ENCODE measurements at regions of chr1 and their contacts with region 1.

Region 1: DNA sequence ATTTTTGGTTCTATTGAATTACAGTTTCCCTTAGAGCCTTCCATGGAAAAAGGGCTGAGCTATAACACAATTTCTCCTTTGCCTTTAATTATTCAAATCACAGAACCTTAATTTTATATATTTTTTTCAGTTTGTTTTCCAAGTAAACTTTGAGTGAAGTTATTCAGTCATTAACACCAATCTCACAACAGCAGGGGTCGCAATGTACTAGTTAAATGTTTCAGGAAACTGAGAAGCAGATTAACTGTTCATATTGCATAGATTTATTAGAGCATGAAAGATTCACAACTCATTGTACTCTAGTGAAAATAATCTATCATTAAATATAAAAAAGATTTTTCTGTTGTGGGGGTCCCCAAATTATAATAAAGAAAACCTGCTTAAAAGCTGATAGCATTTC is 64.1 kb downstream of the KIFAP3 start:
- DNase-seq: peak; percentile 55
- ATAC-seq: peak; percentile 56
- H3K4me3 ChIP-seq: no peak overlapping the region
- H3K27ac ChIP-seq: no peak overlapping the region
- H3K4me1 ChIP-seq: no peaks in the 10 kb centered on the region
- H3K27me3 ChIP-seq: no peaks in the 10 kb centered on the region
- CTCF ChIP-seq: peak; percentile 52
- POLR2A ChIP-seq: no peak
- RAD21 ChIP-seq: peak; percentile 58

Region 2: DNA sequence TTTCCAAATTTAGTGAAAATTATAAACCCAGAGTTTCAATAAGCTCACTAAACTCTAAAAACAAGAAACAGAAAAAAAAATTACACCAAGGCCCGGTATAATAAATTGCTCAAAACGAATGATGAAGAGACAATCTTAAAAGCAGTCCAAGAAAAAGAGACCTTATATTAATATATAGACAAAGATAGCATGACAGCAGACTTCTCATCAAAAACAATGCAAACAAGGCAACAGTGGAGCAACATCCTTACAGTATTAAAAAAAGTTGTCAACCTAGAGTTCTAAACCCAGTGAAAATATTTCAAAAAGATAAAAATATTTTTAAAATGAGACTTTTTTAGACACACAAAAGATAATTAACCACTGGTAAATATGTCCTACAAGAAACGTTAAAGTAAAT is 17.3 kb after region 1 on chr1:
- CTCF ChIA-PET with region 1: no interaction called
- POLR2A ChIA-PET with region 1: no interaction called
- dilution Hi-C with region 1: no loop called
- in situ Hi-C with region 1: no loop called
- intact Hi-C with region 1: no loop called
- DNase-seq: no peak
- ATAC-seq: no peak
- H3K4me3 ChIP-seq: no peak overlapping the region
- H3K27ac ChIP-seq: no peak overlapping the region
- H3K4me1 ChIP-seq: no peaks in the 10 kb centered on the region
- H3K27me3 ChIP-seq: no peaks in the 10 kb centered on the region
- CTCF ChIP-seq: no peak
- POLR2A ChIP-seq: no peak
- RAD21 ChIP-seq: no peak

Region 3: GRCh38 chr1:170765712-170766330 is 755.4 kb after region 1 on chr1:
- CTCF ChIA-PET with region 1: no interaction called
- POLR2A ChIA-PET with region 1: no interaction called
- dilution Hi-C with region 1: no loop called
- in situ Hi-C with region 1: no loop called
- intact Hi-C with region 1: loop called (anchors 2 kb)
- DNase-seq: peak; percentile 64
- ATAC-seq: peak; percentile 87
- H3K4me3 ChIP-seq: no peak overlapping the region
- H3K27ac ChIP-seq: no peak overlapping the region
- H3K4me1 ChIP-seq: no peaks in the 10 kb centered on the region
- H3K27me3 ChIP-seq: no peaks in the 10 kb centered on the region
- CTCF ChIP-seq: peak; percentile 75
- POLR2A ChIP-seq: no peak
- RAD21 ChIP-seq: peak; percentile 84

Region 4: DNA sequence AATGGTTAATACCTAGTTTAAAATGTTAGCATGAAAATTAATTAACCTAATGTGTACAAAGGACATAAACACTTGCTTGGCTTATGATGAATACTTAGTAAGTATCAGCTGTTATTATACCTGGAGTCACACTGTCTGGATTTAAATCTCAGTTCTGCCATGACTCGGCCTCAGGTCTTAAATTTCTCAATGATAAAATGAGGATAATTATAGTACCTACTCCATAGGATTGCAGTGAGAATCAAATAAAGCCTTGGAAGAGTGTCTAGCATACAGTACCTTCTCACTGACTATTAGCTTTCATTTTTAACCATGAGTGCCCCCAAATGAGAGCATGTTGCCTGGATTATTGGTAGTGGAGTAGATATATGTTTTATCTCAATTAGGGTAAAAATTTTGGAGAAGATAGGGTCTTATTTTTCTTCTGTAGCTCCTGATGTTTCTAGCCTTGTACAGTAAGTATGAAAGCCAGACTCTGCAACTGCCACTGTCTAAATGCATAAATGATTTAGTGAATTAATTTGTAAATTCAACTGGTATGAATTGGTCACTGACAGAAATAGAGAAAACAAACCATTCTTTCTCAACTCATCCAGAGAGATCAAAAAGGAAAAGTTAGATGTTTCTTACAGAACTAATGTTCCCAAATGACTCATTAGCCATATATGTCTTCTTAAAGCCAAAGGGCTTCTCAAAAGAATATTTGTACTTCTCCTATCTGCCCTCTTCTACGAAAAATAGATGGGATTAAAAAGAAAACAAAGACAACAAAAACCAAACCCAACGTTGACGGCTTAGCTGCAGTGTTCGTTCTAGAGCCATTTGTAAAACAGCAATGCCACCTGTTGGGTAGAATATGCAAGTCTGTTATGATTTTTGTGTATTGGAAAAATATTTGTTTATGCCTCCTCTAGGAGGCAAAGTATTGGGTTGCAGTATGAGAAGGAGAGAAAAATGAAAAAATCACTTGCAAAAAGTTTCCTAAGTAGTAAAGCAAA is 871.1 kb after region 1 on chr1:
- CTCF ChIA-PET with region 1: no interaction called
- POLR2A ChIA-PET with region 1: no interaction called
- dilution Hi-C with region 1: no loop called
- in situ Hi-C with region 1: no loop called
- intact Hi-C with region 1: loop called (anchors 2 kb)
- DNase-seq: peak; percentile 42
- ATAC-seq: peak; percentile 63
- H3K4me3 ChIP-seq: no peak overlapping the region
- H3K27ac ChIP-seq: no peak overlapping the region
- H3K4me1 ChIP-seq: no peaks in the 10 kb centered on the region
- H3K27me3 ChIP-seq: no peaks in the 10 kb centered on the region
- CTCF ChIP-seq: peak; percentile 52
- POLR2A ChIP-seq: no peak
- RAD21 ChIP-seq: peak; percentile 74

Region 5: GRCh38 chr1:170893655-170894297 is 883.3 kb after region 1 on chr1:
- CTCF ChIA-PET with region 1: no interaction called
- POLR2A ChIA-PET with region 1: no interaction called
- dilution Hi-C with region 1: no loop called
- in situ Hi-C with region 1: no loop called
- intact Hi-C with region 1: loop called (anchors 1 kb)
- DNase-seq: no peak
- ATAC-seq: no peak
- H3K4me3 ChIP-seq: no peak overlapping the region
- H3K27ac ChIP-seq: no peak overlapping the region
- H3K4me1 ChIP-seq: no peaks in the 10 kb centered on the region
- H3K27me3 ChIP-seq: no peaks in the 10 kb centered on the region
- CTCF ChIP-seq: no peak
- POLR2A ChIP-seq: no peak
- RAD21 ChIP-seq: no peak

Region 6: DNA sequence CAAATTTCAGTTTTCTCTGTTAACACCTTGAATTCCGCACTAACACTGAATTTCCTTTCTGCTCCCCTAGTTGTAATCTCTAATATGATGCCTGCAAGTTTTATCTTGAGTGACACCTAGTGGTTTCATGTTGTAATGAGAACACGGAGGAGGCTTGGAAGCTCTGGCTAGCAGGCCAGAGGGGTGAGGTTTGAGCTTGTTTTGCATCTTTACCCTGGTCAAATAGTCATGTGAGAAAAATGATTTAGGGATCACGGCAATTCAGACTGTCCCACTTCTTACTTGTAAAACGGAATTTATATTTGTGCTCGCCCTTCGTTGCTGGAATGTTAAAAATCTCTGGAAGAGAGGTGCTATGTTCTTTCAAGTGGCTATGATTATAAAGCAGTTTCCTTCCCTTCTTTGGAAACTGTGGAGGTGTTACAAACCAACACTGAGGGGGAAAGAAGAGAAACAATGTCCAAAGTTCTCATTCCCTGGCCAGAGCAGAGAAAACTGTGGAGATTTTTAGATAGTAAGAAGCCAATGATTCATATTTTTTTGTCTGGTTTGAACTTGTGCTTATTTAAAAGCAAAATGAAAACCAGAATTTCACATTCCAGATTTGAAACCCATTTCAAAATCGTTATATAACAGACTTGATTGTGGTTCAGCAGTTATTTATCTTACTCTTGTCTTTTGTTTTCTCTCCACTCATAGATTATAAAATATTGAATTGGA is 919.6 kb after region 1 on chr1:
- CTCF ChIA-PET with region 1: no interaction called
- POLR2A ChIA-PET with region 1: no interaction called
- dilution Hi-C with region 1: no loop called
- in situ Hi-C with region 1: no loop called
- intact Hi-C with region 1: loop called (anchors 1 kb)
- DNase-seq: peak; percentile 66
- ATAC-seq: peak; percentile 98
- H3K4me3 ChIP-seq: no peak overlapping the region
- H3K27ac ChIP-seq: no peak overlapping the region
- H3K4me1 ChIP-seq: no peaks in the 10 kb centered on the region
- H3K27me3 ChIP-seq: no peaks in the 10 kb centered on the region; the same call in 1 of the 2 replicates
- CTCF ChIP-seq: peak; percentile 76
- POLR2A ChIP-seq: no peak
- RAD21 ChIP-seq: peak; percentile 79